Adrenal gland (tissue), 19 donors: ENCODE measurements at regions of chr12 and their contacts with region 1.

Region 1: GRCh38 chr12:6873094-6874014 is at the start of gene SPSB2:
- DNase-seq: peak; percentile 97 to 99 (median 99)
- H3K4me3 ChIP-seq: peak within 1 kb of the TSS; percentile 58 to 95 (median 92)
- H3K27ac ChIP-seq: peak within 1 kb of the TSS; percentile 76 to 96 (median 85)
- H3K4me1 ChIP-seq: peaks cover 31 to 48% of the 10 kb centered on the region in 2 donors
- H3K27me3 ChIP-seq: no peaks in the 10 kb centered on the region
- CTCF ChIP-seq: peak in 2 of 6 experiments; percentile 6 to 17
- POLR2A ChIP-seq: peak; percentile 45 to 49
- total RNA-seq, gene SPSB2: 3.3 to 24.5 (median 15.5) TPM

Region 2: DNA sequence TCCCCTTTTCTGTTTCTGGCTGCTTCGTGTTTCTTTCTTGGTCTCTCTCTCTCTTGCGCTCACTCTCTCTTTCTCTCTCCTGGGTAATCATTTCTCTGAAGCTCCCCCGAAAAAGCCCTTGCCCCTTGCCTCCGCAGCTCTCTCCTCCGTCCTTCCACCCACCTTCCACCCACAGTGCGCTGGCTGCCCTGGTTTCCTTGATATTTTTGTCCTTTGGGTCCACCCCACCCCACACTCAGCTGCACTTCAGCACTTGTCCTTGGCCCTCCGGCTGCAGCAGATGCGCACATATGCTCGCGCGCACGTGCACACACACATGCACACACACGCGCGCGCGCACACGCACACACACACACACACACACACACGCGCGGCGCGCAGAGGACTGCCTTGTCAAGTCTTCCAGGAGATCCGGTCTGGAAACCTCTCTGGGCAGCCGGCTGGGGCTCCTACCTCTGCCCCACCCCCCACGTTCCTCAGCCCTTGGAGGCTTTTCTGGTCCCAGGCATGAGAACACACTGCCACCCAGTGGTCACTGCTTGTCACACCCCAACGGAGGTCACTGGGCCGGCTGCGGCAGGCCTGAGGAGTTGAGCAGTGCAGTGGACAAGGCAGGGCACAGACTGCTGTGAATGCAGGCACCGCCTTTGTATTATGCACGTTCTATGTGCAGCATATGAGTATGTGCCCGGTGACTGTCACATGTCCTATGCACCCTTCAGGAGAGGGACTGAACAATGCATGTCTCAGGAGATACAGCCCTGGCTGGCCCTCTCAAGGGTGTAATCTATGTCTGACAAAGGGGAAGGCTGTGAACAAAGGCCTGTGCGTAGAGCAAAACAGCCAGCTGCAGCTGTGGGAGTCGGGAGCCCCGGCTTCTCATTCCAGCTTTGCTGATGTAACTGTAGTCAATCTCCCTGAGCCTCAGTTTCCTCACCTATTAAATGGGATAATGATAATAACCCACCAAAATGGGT is 94.5 kb before region 1 on chr12:
- intact Hi-C with region 1: no loop called
- DNase-seq: peak; percentile 95 to 98 (median 97)
- H3K4me3 ChIP-seq: peak overlapping the region in 2 of 4 donors; percentile 4 to 44
- H3K27ac ChIP-seq: peak overlapping the region in 4 of 5 donors; percentile 3 to 84 (median 48)
- H3K4me1 ChIP-seq: peaks cover 7 to 13% of the 10 kb centered on the region in 2 donors
- H3K27me3 ChIP-seq: no peaks in the 10 kb centered on the region
- CTCF ChIP-seq: peak; percentile 88 to 99 (median 98)
- POLR2A ChIP-seq: peak in 1 of 2 donors; percentile 59

Region 3: DNA sequence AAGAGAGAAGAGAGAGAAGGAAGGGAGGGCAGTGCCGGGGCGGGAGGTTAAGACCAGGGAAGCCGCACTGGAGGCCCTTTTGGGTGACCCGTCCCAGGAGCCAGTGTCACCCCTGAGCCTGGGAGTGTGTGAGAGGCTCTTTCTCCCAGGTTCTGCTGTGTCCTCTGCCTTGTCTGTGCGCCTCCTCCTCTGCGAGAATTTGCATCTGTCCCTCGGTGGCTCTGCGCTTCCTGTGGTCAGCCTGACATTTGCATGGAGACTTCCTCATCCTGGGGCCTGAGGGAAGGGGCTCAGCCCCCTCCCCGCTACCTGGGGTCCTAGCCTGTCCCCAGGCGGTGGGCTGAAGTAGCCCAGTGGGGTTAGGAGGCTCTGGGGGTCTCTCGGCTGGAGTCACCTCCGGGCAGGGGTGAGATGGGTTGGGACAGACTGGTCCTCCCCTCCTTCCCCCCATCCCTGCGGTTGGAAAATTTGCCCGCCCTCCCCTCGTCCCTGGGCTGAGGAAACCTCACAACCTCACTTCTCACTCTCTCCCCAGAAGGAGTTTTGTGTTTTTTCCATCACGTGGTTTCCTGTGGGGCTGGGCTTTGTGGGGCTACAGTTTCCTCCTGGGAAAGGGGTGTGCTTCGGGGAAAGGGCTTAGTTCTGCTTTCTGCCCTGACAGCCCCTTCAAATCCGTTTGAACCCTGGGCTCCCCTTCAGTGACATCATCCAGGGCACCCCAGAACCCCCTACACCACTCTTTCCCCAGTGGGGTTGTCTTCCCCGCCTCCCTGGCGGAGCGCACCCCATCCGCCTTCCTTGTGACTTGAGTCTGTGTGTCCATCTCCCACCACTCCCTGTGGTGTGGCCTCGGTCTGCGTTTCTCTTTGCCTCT is 80.3 kb after region 1 on chr12:
- intact Hi-C with region 1: loop called in 1 of 2 experiments (anchors 10 kb)
- DNase-seq: peak in 5 of 7 donors; percentile 43 to 66 (median 57)
- H3K4me3 ChIP-seq: peak overlapping the region in 1 of 4 donors; percentile 33
- H3K27ac ChIP-seq: peak overlapping the region; percentile 4 to 83 (median 14)
- H3K4me1 ChIP-seq: peaks cover 10 to 34% of the 10 kb centered on the region in 2 donors
- H3K27me3 ChIP-seq: no peaks in the 10 kb centered on the region
- CTCF ChIP-seq: no peak
- POLR2A ChIP-seq: peak; percentile 28 to 33